CD4-positive, alpha-beta memory T cell (primary cell): ENCODE measurements at regions of chr10 and their contacts with region 1.

Region 1: GRCh38 chr10:87850742-87851205 is 12.6 kb downstream of the KLLN start:
- DNase-seq: peak; percentile 38 to 59 (median 52)
- H3K4me3 ChIP-seq: no peak overlapping the region
- H3K4me3 Mint-ChIP-seq: no peak overlapping the region
- H3K27ac ChIP-seq: no peak overlapping the region
- H3K27ac Mint-ChIP-seq: no peak overlapping the region
- H3K4me1 ChIP-seq: peaks cover 6% of the 10 kb centered on the region
- H3K4me1 Mint-ChIP-seq: peaks cover 8 to 14% (median 9%) of the 10 kb centered on the region in 4 donors
- H3K27me3 ChIP-seq: no peaks in the 10 kb centered on the region
- H3K27me3 Mint-ChIP-seq: no peaks in the 10 kb centered on the region

Region 2: DNA sequence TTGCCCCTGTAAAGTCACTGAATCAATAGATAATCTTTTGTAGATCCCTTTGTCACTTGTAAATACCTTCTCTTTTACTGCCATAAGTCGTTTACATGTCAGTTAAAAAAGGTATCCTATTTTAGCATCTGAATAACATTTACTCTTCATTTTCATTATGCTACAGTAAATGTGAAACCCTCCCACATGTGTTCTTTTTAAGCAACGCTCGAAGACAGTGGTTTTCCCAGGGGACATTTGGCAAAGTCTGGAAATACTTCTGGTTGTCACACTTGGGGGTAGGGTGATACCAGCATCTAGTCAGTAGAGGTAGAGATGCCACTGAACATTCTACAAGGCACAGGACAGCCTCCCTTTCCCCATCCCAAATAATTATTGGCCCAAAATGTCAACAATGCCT is 56.5 kb before region 1 on chr10:
- CTCF ChIA-PET with region 1: no interaction called
- POLR2A ChIA-PET with region 1: no interaction called
- intact Hi-C with region 1: no loop called
- DNase-seq: no peak
- H3K4me3 ChIP-seq: no peak overlapping the region
- H3K4me3 Mint-ChIP-seq: no peak overlapping the region
- H3K27ac ChIP-seq: no peak overlapping the region
- H3K27ac Mint-ChIP-seq: peak overlapping the region in 6 of 7 donors; percentile 18 to 80 (median 69)
- H3K4me1 ChIP-seq: peaks cover 10% of the 10 kb centered on the region
- H3K4me1 Mint-ChIP-seq: peaks cover 26 to 68% (median 35%) of the 10 kb centered on the region in 4 donors
- H3K27me3 ChIP-seq: no peaks in the 10 kb centered on the region
- H3K27me3 Mint-ChIP-seq: no peaks in the 10 kb centered on the region

Region 3: GRCh38 chr10:88114368-88114767 is 263.6 kb after region 1 on chr10:
- CTCF ChIA-PET with region 1: interaction called, 22 read pairs
- POLR2A ChIA-PET with region 1: interaction called, 4 read pairs
- intact Hi-C with region 1: no loop called
- DNase-seq: peak in 2 of 5 donors; percentile 13 to 18
- H3K4me3 ChIP-seq: no peak overlapping the region
- H3K4me3 Mint-ChIP-seq: no peak overlapping the region
- H3K27ac ChIP-seq: no peak overlapping the region
- H3K27ac Mint-ChIP-seq: peak overlapping the region in 2 of 7 donors; percentile 4 to 13
- H3K4me1 ChIP-seq: peaks cover 32% of the 10 kb centered on the region
- H3K4me1 Mint-ChIP-seq: peaks cover 7 to 17% (median 10%) of the 10 kb centered on the region in 4 donors
- H3K27me3 ChIP-seq: no peaks in the 10 kb centered on the region
- H3K27me3 Mint-ChIP-seq: peaks cover 0 to 1% of the 10 kb centered on the region in 2 donors

Region 4: DNA sequence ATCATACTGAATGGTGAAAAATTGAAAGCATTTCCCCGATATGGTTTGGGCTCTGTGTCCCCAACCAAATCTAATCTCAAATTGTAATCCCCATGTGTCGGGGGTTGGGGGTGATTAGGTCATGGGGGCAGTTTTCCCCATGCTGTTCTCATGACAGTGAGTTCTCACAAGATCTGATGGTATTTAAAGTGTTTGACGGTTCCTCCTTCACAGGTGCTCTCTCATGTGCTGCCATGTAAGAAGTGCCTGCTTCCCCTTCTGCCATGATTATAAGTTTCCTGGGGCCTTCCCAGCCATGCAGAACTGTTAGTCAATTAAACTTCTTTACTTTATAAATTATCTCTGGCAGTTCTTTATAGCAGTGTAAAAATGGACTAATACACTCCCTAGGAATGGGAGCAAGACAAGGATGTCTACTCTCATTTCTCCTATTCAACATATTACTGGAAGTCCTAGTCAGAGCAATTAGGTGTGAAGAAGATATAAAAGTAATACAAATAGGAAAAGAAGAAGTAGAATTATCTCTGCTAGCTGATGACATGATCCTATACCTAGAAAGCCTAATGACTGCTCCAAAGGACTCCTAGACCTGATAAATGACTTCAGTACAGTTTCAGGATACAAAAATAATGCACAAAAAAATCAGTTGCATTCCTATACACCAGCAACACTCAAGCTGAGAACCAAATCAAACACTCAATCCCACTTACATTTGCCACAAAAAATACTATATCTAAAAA is 471.7 kb after region 1 on chr10:
- CTCF ChIA-PET with region 1: no interaction called
- POLR2A ChIA-PET with region 1: no interaction called
- intact Hi-C with region 1: no loop called
- DNase-seq: no peak
- H3K4me3 ChIP-seq: no peak overlapping the region
- H3K4me3 Mint-ChIP-seq: no peak overlapping the region
- H3K27ac ChIP-seq: no peak overlapping the region
- H3K27ac Mint-ChIP-seq: no peak overlapping the region
- H3K4me1 ChIP-seq: no peaks in the 10 kb centered on the region
- H3K4me1 Mint-ChIP-seq: peaks cover 0 to 5% (median 0%) of the 10 kb centered on the region in 4 donors
- H3K27me3 ChIP-seq: no peaks in the 10 kb centered on the region
- H3K27me3 Mint-ChIP-seq: no peaks in the 10 kb centered on the region

Region 5: DNA sequence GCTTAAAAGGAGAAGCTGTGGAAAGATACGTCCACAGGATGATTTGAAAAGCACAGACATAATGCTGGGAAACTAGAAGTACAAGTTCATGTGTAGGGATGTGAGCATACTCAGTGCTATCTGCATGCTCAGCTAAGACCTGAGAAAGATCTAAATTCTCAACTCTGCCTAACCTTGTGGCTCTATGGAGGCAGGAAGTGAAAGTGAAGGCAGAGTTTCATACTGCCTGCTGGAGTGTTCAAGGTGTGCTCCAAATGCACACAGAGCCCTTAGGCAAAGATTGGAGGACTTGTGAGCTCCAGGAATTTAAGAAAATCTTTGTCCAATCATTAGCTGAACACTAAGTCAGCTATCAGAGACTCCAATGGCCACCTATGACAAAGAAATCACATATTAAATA is 541.4 kb after region 1 on chr10:
- CTCF ChIA-PET with region 1: interaction called, 57 read pairs
- POLR2A ChIA-PET with region 1: interaction called, 8 read pairs
- intact Hi-C with region 1: loop called (anchors 1 kb)
- DNase-seq: peak in 3 of 5 donors; percentile 13 to 26 (median 21)
- H3K4me3 ChIP-seq: no peak overlapping the region
- H3K4me3 Mint-ChIP-seq: peak overlapping the region in 7 of 8 donors; percentile 8 to 73 (median 12)
- H3K27ac ChIP-seq: no peak overlapping the region
- H3K27ac Mint-ChIP-seq: peak overlapping the region in 5 of 7 donors; percentile 64 to 72 (median 70)
- H3K4me1 ChIP-seq: peaks cover 42% of the 10 kb centered on the region
- H3K4me1 Mint-ChIP-seq: peaks cover 8 to 12% (median 10%) of the 10 kb centered on the region in 4 donors
- H3K27me3 ChIP-seq: no peaks in the 10 kb centered on the region
- H3K27me3 Mint-ChIP-seq: no peaks in the 10 kb centered on the region